ENCODE measurements at regions of chr6 and their contacts with region 1.

Region 1: DNA sequence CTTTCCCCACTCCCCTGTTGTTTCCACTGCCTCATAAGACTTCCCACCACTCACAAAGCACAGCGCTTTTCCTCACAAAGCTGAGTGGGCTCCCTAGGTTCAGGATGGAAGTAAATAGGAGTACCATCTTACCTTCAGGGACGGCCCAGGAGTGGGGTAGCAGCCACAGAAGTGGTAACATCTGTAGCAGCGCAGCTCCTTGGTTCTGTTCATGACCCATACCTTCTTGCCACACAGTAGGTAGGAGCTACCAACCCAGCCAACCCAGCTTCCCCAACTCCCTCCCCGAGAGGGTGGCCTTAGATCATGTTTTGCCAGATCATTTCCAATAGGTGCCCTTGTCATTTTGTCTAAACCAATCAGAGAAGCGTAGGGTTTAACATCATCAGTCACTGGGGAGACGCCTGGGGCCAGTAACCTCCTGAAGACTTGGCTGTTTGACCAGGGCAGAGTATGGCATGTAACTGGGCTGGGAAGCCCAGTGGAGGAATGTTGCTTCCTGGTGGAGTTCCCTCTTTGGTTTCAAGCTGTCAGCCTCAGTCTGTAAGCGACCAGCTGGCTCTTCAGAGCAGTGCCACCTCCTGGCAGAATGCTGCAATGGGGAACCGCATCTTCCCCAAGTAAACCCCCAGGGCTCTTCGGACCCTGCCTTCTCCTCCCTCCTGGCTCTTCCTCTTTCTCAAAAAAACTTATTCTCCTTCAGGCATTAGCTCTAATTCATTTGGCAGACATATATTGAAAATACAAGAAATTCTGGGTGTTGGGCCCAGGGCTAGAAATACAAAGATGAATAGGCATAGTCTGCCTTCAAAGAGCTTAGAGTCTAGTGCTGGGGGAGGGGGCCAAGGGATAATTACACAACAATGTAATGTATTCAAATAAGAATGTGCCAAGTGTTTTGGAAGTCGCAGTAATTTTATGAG is at the start of gene HLA-DMA:
- DNase-seq: peak; percentile 76 to 95
- H3K4me3 ChIP-seq: peak within 1 kb of the TSS in 1 of 2 donors; percentile 53
- H3K27ac ChIP-seq: peak within 1 kb of the TSS; percentile 71 to 72
- H3K4me1 ChIP-seq: peaks cover 0 to 2% of the 10 kb centered on the region in 2 donors
- H3K27me3 ChIP-seq: no peaks in the 10 kb centered on the region
- CTCF ChIP-seq: peak; percentile 74 to 83 (median 83)
- total RNA-seq, gene HLA-DMA: 28.0 TPM

Region 2: DNA sequence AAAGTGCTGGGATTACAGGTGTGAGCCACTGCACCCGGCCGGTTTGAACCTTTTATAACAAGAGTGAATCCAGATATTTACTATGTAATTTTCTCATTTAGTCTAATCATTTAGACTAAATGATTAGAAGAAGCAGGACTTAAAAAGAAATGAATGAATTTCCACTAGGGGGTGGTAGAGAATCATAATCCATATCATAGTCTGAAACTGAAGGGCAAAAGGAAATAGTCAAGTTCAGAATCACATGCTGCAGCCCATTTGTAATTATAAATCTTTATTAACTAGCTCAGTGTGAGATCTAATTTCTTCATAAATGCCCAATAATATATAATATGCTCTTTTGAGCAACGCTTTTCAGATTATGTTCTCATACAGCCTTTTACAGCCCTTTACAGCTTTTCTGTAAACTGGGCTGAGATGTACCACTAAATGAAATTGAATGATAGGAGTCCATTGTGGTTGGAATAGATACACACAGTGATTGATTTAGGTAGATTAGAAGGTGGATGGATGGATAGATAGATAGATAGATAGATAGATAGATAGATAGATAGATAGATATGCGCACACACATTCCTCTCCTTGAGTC is 67.3 kb before region 1 on chr6:
- intact Hi-C with region 1: loop called (anchors 1 kb)
- DNase-seq: no peak
- H3K4me3 ChIP-seq: no peak overlapping the region
- H3K27ac ChIP-seq: no peak overlapping the region
- H3K4me1 ChIP-seq: peaks cover 0 to 2% of the 10 kb centered on the region in 2 donors
- H3K27me3 ChIP-seq: no peaks in the 10 kb centered on the region
- CTCF ChIP-seq: peak; percentile 56 to 64 (median 63)

Region 3: GRCh38 chr6:32894080-32895005 is 58.7 kb before region 1 on chr6:
- intact Hi-C with region 1: loop called (anchors 2 kb)
- DNase-seq: peak; percentile 67 to 94
- H3K4me3 ChIP-seq: peak overlapping the region; percentile 78 to 94
- H3K27ac ChIP-seq: peak overlapping the region; percentile 86 to 92
- H3K4me1 ChIP-seq: peaks cover 5 to 8% of the 10 kb centered on the region in 2 donors
- H3K27me3 ChIP-seq: no peaks in the 10 kb centered on the region
- CTCF ChIP-seq: no peak

Region 4: DNA sequence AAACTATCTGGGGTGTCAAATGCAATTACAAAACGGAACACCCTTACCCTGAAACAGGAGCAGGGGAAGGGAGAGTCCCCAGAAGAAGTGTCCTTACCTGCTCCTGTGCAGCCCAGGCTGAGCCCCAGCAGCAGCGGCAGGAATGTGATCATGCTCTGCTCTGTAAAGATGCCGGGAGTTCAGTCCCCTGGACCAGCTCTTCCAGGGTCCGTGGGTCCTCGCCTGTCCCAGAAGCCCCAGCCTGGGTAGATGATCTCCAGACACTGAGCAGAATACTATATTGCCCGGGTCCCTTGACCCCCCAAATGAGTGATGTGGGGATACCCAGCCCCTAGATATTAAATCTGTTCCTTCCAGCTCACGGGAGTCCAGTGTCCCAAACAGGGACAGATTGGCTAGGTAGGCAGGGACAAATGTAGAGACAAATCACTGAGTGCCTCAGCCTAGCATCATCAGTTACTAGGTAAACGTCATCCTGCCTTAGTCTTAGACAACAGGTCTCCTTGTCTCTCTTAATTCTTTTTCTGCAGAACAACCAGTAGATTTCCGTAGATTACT is 12.3 kb before region 1 on chr6 and contains the start of gene HLA-DMB:
- intact Hi-C with region 1: loop called (anchors 2 kb)
- DNase-seq: peak in 1 of 2 donors; percentile 84
- H3K4me3 ChIP-seq: peak within 1 kb of the TSS; percentile 33 to 56
- H3K27ac ChIP-seq: peak within 1 kb of the TSS; percentile 41 to 50
- H3K4me1 ChIP-seq: peaks cover 0 to 3% of the 10 kb centered on the region in 2 donors
- H3K27me3 ChIP-seq: no peaks in the 10 kb centered on the region
- CTCF ChIP-seq: no peak
- total RNA-seq, gene HLA-DMB: 26.8 TPM

Measured in ascending aorta (tissue), 2 donors.